ENCODE measurements at regions of chr20 and their contacts with region 1.

Region 1: GRCh38 chr20:2206957-2207769 is 88.6 kb upstream of the TGM3 start:
- DNase-seq: peak; percentile 86
- CTCF ChIP-seq: peak; percentile 77

Region 2: DNA sequence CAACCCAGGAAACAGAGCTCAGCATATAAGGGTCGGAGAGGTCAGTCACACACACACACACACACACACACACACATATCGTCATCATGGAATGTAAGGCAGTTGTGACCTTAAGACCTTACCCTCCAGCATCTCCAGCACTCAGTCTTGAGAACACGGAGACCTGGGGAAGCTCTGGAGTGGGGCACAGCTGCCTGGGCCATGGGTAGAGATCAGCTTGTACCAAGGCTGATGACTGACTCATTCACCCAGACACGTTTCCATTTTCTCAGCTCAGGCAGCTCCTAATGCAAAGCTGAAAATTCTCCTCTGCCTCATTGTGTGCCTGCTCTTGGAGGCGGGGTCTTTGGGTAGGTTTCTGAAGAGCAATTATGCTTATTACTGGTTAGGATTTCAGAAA is 175.0 kb before region 1 on chr20:
- CTCF ChIA-PET with region 1: no interaction called
- POLR2A ChIA-PET with region 1: no interaction called
- DNase-seq: no peak
- CTCF ChIP-seq: no peak

Region 3: GRCh38 chr20:2217857-2218539 is 10.8 kb after region 1 on chr20:
- CTCF ChIA-PET with region 1: interaction called, 22 read pairs
- POLR2A ChIA-PET with region 1: no interaction called
- DNase-seq: no peak
- CTCF ChIP-seq: no peak

Region 4: DNA sequence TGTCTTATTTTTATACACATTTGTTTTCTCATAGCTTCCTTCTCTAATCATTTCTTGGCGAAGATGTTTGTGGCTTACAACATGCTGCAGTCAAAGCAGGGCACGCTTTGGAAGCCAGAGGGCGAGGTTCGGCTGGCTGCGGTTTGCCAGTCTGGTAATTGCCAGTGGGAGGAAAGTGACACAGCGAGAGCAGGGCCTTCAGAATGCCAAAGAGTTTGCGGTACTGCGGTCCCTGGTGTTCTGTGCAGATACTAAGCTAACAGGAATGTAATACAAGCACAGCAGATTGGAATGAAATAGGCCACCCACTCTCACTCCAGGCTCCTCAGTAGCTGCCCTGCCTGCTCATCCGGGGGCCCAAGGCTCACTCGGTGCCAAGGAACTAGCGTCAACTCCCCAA is 29.9 kb after region 1 on chr20:
- CTCF ChIA-PET with region 1: interaction called, 14 read pairs
- POLR2A ChIA-PET with region 1: no interaction called
- DNase-seq: no peak
- CTCF ChIP-seq: no peak

Region 5: DNA sequence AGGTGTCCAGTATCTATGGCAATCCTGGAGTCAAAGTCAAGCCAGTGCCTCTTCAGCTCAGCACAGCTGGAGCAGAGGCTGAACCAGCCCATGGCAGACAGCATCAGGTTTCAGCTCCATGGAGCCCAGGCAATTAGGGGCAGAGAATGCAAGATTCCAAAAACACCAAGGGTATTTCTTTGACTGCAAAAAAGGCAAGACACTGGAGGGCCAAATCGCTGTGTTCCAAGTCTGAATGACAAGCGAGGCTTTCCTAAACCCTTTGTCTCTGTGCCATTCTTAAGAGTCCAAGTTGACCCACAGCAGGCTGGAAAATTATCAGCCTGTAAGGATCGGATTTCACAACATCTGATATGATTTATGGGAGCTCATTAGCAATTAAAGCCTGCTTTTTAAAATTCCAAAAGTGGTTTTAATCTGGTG is 38.9 kb after region 1 on chr20:
- CTCF ChIA-PET with region 1: interaction called, 12 read pairs
- POLR2A ChIA-PET with region 1: no interaction called
- DNase-seq: no peak
- CTCF ChIP-seq: no peak